ENCODE measurements at regions of chr19 and their contacts with region 1.

Region 1: DNA sequence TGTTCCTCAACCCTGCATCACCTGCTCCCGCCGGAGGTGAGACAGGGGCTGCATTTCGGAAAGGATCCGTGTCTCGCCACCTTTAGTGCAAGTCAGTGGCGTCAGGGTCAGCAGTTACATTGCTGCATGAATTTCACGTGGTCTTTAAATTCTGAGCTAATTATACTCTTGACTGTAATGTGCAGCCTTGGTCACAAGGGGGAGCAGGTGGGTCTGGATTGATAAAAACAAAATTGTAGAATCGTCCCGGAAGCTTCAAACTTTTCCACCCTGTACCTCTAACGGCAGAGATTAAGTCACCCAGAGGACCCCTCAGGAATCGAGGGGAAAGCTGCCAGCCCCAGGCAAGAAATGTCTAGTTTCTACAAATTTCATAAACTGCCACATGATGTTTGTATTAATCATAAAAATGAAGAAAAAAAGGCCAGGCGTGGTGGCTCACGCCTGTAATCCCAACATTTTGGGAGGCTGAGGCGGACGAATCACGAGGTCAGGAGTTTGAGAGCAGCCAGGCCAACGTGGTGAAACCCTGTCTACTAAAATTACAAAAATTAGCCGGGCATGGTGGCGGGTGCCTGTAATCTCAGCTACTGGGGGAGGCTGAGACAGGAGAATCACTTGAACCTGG is 20.2 kb downstream of the BBC3 start:
- DNase-seq: peak; percentile 53
- ATAC-seq: peak; percentile 94
- H3K4me3 Mint-ChIP-seq: no peak overlapping the region
- H3K27ac Mint-ChIP-seq: peak overlapping the region; percentile 87
- H3K4me1 Mint-ChIP-seq: peaks cover 9% of the 10 kb centered on the region
- H3K27me3 Mint-ChIP-seq: no peaks in the 10 kb centered on the region
- CTCF ChIP-seq: peak; percentile 83

Region 2: GRCh38 chr19:47152224-47153017 is 58.4 kb before region 1 on chr19:
- CTCF ChIA-PET with region 1: interaction called, 15 read pairs
- POLR2A ChIA-PET with region 1: interaction called, 7 read pairs
- intact Hi-C with region 1: loop called (anchors 2 kb)
- DNase-seq: no peak
- ATAC-seq: no peak
- H3K4me3 Mint-ChIP-seq: no peak overlapping the region
- H3K27ac Mint-ChIP-seq: no peak overlapping the region
- H3K4me1 Mint-ChIP-seq: peaks cover 19% of the 10 kb centered on the region
- H3K27me3 Mint-ChIP-seq: no peaks in the 10 kb centered on the region
- CTCF ChIP-seq: no peak

Measured in activated B cell treated with CpG ODN at 0.5 μM for 24 hours (primary cell).